ENCODE measurements at regions of chr6 and their contacts with region 1.

Region 1: DNA sequence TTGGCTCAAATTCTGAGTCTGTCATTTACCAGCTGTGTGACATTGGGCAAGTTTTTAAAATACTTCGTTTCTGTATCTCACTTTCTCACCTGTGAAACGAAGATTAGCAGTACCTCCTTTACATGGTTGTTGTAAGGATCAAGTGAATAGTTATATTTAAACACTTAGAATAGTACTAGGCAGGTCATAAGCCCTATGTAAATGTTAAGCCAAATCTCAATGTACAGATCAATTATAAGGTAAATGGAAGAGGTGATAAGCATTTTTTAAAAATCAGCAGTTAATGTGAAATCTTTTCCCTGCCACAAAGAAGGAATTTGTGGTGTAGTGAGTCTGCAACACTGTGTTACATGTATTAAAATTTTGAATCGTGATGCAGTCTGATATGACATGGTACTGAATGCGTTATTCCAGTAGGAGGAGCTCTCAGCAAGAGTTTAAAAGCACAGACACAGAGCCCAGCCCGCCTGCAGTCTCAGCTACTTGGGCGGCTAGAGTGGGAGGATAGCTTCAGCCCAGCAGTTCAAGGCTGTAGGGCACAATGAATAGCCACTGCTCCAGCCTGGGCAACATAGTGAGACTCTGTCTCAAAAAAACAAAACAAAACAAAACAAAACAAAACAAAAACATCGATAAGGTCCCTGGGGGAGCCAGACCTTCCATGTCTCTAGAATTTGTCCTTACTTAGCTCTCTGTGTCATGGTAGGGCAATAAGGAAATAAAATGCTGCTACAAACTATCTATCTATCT is 46.0 kb downstream of the GTF2H5 start:
- DNase-seq: peak; percentile 16 to 28
- ATAC-seq: peak; percentile 74 to 82
- H3K4me3 ChIP-seq: no peak overlapping the region
- H3K27ac ChIP-seq: no peak overlapping the region
- H3K4me1 ChIP-seq: no peaks in the 10 kb centered on the region
- H3K27me3 ChIP-seq: no peaks in the 10 kb centered on the region
- CTCF ChIP-seq: peak in 4 of 5 experiments; percentile 22 to 69 (median 53)
- POLR2A ChIP-seq: no peak

Region 2: DNA sequence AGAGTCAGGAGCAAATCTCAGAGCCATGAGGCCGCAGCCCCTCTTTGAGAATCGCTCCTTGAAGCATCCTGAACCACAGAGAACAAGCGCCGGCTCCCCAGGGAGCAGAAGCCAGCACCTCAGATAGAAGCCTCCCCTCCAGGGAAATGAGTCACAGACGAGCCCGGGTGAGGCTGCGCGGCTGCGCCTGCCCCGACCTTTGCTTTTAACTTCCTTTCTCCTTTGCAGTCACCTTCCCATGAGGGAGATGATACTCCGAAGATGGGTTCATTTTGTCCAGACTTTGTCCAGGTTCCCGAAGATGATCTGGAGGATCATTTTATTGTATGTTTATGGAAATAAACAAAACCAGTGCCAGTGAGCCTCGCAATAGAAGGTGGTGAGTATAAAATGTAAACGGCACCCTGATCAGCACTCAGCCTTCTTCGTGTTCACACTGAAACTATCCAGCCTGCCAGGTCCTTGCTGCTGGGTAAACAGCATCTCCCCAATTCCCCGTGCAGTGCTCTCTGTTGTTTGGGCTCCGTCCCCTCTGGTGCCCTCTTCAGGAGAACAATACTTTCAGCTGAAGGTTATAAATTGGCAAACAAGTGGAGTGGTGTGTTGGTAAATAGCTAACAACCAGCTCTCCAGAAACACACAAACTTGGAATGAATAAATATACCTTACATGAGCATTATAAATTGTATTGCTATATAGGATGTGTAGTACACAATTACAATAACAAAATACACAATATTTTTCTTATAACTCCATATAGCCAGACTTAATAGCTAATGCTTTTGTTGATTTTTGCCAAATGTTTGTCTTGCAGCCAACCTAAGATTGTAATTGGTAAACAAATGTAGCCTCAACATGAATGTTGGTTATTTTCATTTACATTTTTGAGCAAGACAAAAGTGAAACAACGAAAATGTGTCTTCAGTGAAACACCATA is 304.4 kb after region 1 on chr6:
- in situ Hi-C with region 1: loop called in 3 of 4 experiments (anchors 25 kb)
- intact Hi-C with region 1: no loop called
- DNase-seq: no peak
- ATAC-seq: peak; percentile 29 to 77
- H3K4me3 ChIP-seq: peak overlapping the region in 3 of 4 donors; percentile 6 to 19 (median 6)
- H3K27ac ChIP-seq: no peak overlapping the region
- H3K4me1 ChIP-seq: no peaks in the 10 kb centered on the region
- H3K27me3 ChIP-seq: peaks cover 17 to 22% (median 20%) of the 10 kb centered on the region in 3 donors
- CTCF ChIP-seq: peak in 3 of 5 experiments; percentile 43 to 52 (median 50)
- POLR2A ChIP-seq: no peak

Region 3: GRCh38 chr6:158605266-158605878 is 391.3 kb after region 1 on chr6:
- in situ Hi-C with region 1: loop called in 1 of 4 experiments (anchors 10 kb)
- intact Hi-C with region 1: loop called (anchors 2 kb)
- DNase-seq: no peak
- ATAC-seq: peak; percentile 58 to 75
- H3K4me3 ChIP-seq: no peak overlapping the region
- H3K27ac ChIP-seq: no peak overlapping the region
- H3K4me1 ChIP-seq: no peaks in the 10 kb centered on the region
- H3K27me3 ChIP-seq: no peaks in the 10 kb centered on the region
- CTCF ChIP-seq: peak; percentile 34 to 62 (median 55)
- POLR2A ChIP-seq: no peak

Region 4: DNA sequence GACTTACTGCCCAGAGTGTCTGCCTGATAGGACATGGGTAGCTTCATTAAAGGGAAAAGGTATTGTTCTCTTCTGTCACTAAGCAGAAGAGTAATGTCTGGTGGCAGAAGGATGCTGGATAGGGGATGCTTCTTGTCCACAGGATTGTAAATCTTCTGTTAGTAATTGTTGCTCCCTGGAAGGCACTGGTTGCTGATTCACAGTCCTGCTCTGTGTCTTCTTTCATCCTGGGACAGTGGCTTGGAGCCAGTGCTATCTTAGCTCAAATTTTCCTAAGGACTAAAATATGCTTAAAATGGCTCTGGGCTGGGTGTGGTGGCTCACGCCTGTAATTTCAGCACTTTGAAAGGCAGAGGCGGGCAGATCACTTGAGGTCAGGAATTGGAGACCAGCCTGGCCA is 483.7 kb after region 1 on chr6:
- in situ Hi-C with region 1: loop called in 1 of 4 experiments (anchors 10 kb)
- intact Hi-C with region 1: no loop called
- DNase-seq: no peak
- ATAC-seq: no peak
- H3K4me3 ChIP-seq: no peak overlapping the region
- H3K27ac ChIP-seq: no peak overlapping the region
- H3K4me1 ChIP-seq: no peaks in the 10 kb centered on the region
- H3K27me3 ChIP-seq: no peaks in the 10 kb centered on the region
- CTCF ChIP-seq: no peak
- POLR2A ChIP-seq: no peak